Posterior vena cava (tissue), 2 donors: ENCODE measurements at regions of chr5 and their contacts with region 1.

Region 1: DNA sequence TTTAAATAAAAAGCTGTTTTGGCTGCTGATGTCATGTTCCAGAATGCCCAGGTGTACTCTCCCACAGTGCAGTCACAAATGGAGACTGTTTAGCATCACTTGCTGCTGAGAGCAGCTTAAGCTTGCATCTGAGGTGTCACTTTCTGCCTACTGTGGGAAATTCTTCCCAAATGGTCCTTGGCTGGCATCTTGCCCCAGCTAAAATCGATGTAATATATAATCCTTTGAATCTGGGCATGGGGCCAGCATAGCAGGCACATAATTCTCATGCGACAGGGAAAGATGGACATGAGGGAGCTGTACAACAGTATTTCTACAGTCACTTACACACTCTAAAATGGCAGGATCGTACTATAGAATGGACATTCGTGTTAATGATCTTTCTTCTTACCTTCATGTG is 144.3 kb downstream of the MACIR start:
- DNase-seq: no peak

Region 2: GRCh38 chr5:102200861-102201260 is 1202.0 kb before region 1 on chr5:
- intact Hi-C with region 1: loop called in 1 of 2 experiments (anchors 5 kb)
- DNase-seq: no peak

Region 3: GRCh38 chr5:103414622-103415021 is 11.8 kb after region 1 on chr5:
- intact Hi-C with region 1: no loop called
- DNase-seq: no peak